Dorsolateral prefrontal cortex (tissue), 120 donors: ENCODE measurements at regions of chrX and their contacts with region 1.

Region 1: DNA sequence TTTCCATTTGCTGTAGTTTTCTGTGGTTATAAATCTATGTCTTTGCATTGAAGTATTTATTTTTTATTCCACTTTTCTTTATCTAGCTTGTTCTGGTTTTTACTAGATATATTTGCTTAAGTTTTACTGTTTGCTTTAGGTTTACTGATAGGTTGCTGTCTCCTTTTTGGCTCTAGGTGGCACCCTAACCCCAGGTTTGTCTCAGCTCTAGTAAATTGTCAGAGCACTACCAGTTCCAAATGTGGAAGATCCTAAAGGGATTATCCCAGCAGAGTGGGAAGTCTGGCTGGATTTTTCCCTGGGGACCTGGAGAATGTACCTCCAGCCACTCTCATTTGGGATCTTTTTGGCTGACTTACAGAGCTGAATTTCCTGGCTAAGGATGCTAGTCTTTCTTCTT is 106.1 kb downstream of the PBDC1 start:
- DNase-seq: peak in 4 of 10 donors; percentile 8 to 49 (median 27)
- H3K4me3 ChIP-seq: no peak overlapping the region
- H3K27ac ChIP-seq: no peak overlapping the region
- H3K27me3 ChIP-seq: peaks cover 0 to 27% (median 3%) of the 10 kb centered on the region in 45 donors
- CTCF ChIP-seq: peak; percentile 14 to 78 (median 58)

Region 2: DNA sequence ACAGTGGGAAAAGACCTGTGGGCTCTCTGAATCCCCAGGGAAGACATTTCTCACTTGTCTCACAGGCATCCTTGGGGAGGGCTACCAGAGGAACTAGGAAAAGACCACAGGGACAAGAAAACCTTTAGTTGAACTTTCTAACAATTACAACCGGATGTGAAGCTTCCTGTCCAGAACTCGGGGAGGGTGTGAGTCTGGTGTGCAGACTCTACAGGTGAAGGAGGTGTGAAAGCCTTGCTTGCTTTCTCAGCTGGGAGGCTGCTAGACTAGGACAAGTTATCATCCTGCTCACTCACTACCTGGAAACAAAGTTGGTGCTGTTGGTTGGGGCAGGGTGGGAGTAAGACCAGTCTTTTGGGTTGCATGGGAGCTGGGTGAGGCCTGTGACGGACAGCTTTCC is 264.7 kb before region 1 on chrX:
- intact Hi-C with region 1: no loop called
- DNase-seq: no peak
- H3K4me3 ChIP-seq: no peak overlapping the region
- H3K27ac ChIP-seq: no peak overlapping the region
- H3K27me3 ChIP-seq: peaks cover 0 to 70% (median 21%) of the 10 kb centered on the region in 45 donors
- CTCF ChIP-seq: no peak

Region 3: DNA sequence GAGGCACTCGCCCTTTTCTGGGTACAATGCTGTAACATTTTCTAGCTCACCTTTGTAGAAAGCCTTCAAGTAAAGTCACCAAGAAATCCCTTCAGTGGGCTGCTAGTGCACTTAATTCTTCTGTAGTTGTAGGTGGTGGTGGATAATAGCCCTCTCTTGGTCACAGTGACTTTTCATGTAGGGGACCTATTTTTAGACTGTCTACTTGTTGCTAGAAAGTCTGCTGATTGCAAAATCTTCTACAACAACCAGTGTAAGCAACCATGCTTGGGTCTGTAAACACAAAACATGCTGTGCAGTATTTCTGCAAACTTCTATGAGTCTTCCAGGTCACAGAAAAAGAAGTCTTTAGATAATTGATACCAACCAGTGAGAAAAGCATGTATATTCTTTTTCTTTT is 50.5 kb before region 1 on chrX:
- intact Hi-C with region 1: no loop called
- DNase-seq: no peak
- H3K4me3 ChIP-seq: no peak overlapping the region
- H3K27ac ChIP-seq: no peak overlapping the region
- H3K27me3 ChIP-seq: peaks cover 0 to 68% (median 30%) of the 10 kb centered on the region in 45 donors
- CTCF ChIP-seq: no peak

Region 4: DNA sequence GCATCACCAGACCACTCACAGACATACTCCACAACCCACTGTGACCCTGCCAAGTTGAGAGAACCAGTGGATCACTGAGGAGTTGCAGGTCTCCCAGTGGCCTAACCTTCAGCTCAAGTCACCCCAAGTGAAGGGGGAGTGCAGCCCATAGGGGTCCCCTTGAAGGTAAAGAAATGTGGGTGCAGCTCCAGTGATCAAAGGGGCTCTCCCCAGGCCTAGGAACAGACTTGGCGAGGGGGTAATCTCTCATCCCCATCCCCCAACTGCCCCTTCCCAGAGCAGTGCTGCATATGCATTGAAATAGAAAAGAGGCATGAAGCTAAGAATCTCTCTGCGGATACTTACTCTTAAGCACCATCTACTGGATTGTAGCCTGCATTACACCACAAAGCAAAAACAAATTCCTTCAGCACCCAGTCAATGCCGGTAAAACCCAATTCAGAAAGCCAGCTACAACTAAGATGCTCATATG is 175.5 kb after region 1 on chrX:
- intact Hi-C with region 1: loop called in 1 of 2 experiments (anchors 5 kb)
- DNase-seq: no peak
- H3K4me3 ChIP-seq: no peak overlapping the region
- H3K27ac ChIP-seq: no peak overlapping the region
- H3K27me3 ChIP-seq: peaks cover 0 to 49% (median 6%) of the 10 kb centered on the region in 45 donors
- CTCF ChIP-seq: peak in 55 of 56 donors; percentile 25 to 73 (median 53)